Activated CD8-positive, alpha-beta T cell treated with anti-CD3 and anti-CD28 coated beads, Interleukin-2, amount 10 ng/mL, durations not matched to agents 7 days and 5 days (primary cell): ENCODE measurements at regions of chr11 and their contacts with region 1.

Region 1: GRCh38 chr11:117817368-117818040 is 7.0 kb downstream of the FXYD2 start:
- DNase-seq: peak; percentile 92
- ATAC-seq: peak; percentile 31
- H3K4me3 Mint-ChIP-seq: peak overlapping the region; percentile 47
- H3K27ac Mint-ChIP-seq: peak overlapping the region; percentile 95
- H3K4me1 Mint-ChIP-seq: peaks cover 81% of the 10 kb centered on the region
- H3K27me3 Mint-ChIP-seq: no peaks in the 10 kb centered on the region

Region 2: DNA sequence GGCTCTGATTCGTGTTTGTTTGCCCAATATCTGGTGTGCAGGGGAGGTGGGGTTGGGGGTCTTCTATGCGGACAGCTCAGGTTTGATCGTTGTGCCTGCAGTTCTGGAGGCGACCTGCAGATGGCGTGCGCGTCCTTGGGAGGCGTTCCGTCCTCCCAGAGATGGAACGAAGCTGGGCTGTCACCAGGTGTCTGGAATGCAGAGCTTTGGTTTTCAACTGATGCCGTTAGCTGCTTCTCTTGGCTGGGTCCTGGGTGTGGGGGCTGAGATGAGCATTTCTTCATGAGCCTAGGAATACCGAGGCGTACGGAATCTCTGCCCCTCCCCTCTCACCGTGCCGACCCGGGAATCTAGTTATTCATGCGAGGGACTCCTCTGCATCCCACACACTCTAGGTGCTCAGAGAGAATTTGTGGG is 391.2 kb before region 1 on chr11:
- CTCF ChIA-PET with region 1: interaction called, 63 read pairs
- POLR2A ChIA-PET with region 1: interaction called, 3 read pairs
- DNase-seq: peak; percentile 72
- ATAC-seq: peak; percentile 56
- H3K4me3 Mint-ChIP-seq: no peak overlapping the region
- H3K27ac Mint-ChIP-seq: no peak overlapping the region
- H3K4me1 Mint-ChIP-seq: peaks cover 5% of the 10 kb centered on the region
- H3K27me3 Mint-ChIP-seq: no peaks in the 10 kb centered on the region

Region 3: GRCh38 chr11:117828611-117829368 is 11.3 kb after region 1 on chr11:
- CTCF ChIA-PET with region 1: interaction called, 66 read pairs
- POLR2A ChIA-PET with region 1: interaction called, 25 read pairs
- DNase-seq: peak; percentile 92
- ATAC-seq: peak; percentile 88
- H3K4me3 Mint-ChIP-seq: peak overlapping the region; percentile 48
- H3K27ac Mint-ChIP-seq: peak overlapping the region; percentile 90
- H3K4me1 Mint-ChIP-seq: peaks cover 83% of the 10 kb centered on the region
- H3K27me3 Mint-ChIP-seq: no peaks in the 10 kb centered on the region

Region 4: DNA sequence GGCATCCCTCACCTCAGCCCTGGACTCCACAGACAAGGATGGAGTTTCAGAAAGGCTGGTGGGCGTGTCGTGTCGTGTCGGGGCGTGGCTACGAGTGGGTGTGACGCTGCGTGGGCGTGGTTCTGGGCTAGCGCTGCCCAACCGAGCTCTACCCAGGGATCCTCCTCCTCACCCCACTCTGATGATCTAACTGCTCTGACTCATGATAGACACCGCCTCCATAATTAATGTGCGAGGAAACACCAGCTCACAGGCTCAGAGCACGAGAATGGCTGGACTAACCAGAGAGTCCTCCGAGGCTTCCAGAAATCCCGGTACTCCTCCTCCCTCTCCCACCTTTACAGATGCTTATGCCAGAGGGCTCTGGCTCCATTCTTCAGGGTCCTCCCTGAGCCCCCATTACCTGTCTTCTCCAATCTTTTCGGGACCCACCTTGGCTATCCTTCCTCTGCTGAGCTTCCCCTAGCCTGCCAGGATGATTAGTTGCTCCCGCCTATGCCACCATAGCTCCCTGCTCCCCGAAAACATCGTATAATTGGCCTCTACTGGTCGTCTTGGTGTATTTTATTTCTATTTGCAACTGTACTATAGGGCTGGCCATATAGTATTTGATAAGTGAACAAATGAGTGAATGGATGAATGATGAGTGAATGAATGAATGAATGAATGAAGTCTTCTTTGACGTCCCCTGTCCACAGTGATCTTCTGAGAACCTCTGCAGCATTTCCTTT is 89.9 kb after region 1 on chr11:
- CTCF ChIA-PET with region 1: interaction called, 22 read pairs
- POLR2A ChIA-PET with region 1: no interaction called
- DNase-seq: peak; percentile 78
- ATAC-seq: peak; percentile 95
- H3K4me3 Mint-ChIP-seq: peak overlapping the region; percentile 22
- H3K27ac Mint-ChIP-seq: peak overlapping the region; percentile 70
- H3K4me1 Mint-ChIP-seq: peaks cover 20% of the 10 kb centered on the region
- H3K27me3 Mint-ChIP-seq: no peaks in the 10 kb centered on the region

Region 5: DNA sequence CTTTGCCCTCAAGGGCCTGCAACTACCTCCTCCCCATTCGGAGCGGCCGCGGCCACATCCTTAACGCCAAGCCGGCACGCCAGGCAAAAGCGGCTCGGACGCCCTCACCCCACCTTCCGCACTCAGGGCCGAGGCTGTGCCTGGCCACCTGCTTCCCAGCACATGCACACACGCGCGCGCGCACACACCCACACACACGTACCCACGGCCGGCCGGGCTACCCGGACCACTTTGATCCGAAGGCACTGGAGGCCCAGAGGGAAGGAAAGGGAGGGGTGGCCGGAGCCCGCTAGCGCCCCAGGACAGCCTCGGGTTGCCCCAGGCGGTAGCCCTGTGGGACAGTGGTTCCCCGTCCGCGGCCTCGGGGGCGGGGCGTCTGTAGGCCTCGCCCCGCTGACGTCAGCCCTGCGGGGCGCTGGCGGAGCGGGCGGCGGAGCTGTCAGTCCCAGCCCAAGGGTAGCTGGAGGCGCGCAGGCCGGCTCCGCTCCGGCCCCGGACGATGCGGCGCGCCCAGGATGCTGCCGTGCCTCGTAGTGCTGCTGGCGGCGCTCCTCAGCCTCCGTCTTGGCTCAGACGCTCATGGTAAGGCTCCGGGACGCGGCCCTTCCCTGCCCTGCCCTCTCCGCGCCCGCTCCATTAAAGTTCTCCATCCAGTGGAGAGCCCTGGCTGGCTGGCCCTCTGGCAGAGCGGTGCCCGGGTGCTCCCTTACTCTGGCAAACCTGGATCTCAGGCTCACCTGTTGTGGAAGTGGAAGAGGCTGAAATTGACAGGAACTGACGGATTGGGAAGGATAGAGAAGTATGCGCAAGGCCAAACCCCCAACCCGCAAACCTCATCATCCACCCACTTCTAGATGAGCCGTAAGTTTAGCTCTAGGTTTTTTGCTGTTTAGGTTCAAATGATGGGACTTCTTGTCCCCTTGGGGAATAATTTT is 168.7 kb after region 1 on chr11 and contains the start of gene IL10RA:
- CTCF ChIA-PET with region 1: interaction called, 34 read pairs
- POLR2A ChIA-PET with region 1: interaction called, 8 read pairs
- DNase-seq: peak; percentile 88
- ATAC-seq: peak; percentile 89
- H3K4me3 Mint-ChIP-seq: peak within 1 kb of the TSS; percentile 96
- H3K27ac Mint-ChIP-seq: peak within 1 kb of the TSS; percentile 97
- H3K4me1 Mint-ChIP-seq: peaks cover 70% of the 10 kb centered on the region
- H3K27me3 Mint-ChIP-seq: no peaks in the 10 kb centered on the region
- total RNA-seq, gene IL10RA: 202 to 210 TPM